AG04450 (cell line): ENCODE measurements at regions of chr17 and their contacts with region 1.

Region 1: GRCh38 chr17:77542551-77543490 is 402.1 kb downstream of the SEC14L1 start:
- DNase-seq: peak; percentile 66
- H3K4me3 ChIP-seq: no peak overlapping the region
- H3K27ac ChIP-seq: no peak overlapping the region
- H3K27me3 ChIP-seq: peaks cover 15% of the 10 kb centered on the region
- CTCF ChIP-seq: peak; percentile 98

Region 2: DNA sequence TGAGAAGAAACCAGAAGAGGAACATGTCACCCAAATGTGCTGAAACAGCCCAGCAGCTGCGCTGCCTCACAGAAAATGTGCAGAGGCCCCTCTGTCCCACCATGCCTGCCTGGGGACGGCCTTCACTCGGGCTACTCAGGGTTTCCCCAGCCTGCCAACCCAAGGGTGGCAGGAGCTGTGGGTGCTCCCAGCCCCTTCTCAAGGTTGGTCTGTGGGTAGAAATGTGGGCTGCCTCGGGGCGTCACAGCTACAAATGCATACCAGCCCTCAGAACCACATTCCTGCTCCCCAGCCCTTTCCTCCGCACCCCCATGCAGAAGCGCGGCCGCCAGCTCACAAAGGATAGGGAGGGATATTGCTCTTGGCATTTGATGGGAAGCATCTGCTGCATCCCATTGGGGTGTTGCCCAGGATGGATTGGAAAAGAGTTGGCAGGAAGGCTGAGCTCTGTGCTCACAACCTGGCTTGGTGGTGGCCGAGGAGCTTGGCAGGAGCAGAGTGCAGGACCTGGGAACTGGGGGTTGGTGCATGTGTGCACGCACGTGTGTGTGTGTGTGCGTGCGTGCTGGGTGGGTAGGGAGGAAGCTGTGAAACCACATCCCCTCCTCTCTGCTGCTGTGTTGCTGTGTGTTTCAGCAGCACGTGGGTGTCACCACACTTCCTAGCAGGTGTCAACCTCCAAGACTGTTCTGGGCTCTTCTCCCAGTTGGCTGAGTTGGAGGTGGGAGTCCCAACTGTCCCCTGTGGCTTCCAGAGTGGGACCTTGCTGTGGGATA is 97.6 kb before region 1 on chr17:
- CTCF ChIA-PET with region 1: no interaction called
- POLR2A ChIA-PET with region 1: no interaction called
- DNase-seq: no peak
- H3K4me3 ChIP-seq: no peak overlapping the region
- H3K27ac ChIP-seq: peak overlapping the region; percentile 92
- H3K27me3 ChIP-seq: no peaks in the 10 kb centered on the region
- CTCF ChIP-seq: no peak

Region 3: GRCh38 chr17:77476931-77477877 is 65.6 kb before region 1 on chr17:
- CTCF ChIA-PET with region 1: no interaction called
- POLR2A ChIA-PET with region 1: no interaction called
- DNase-seq: peak; percentile 91
- H3K4me3 ChIP-seq: peak overlapping the region; percentile 0; the same call in 1 of the 2 replicates
- H3K27ac ChIP-seq: peak overlapping the region; percentile 83
- H3K27me3 ChIP-seq: no peaks in the 10 kb centered on the region
- CTCF ChIP-seq: no peak; the same call in 1 of the 2 replicates

Region 4: GRCh38 chr17:77553459-77554066 is 10.7 kb after region 1 on chr17:
- CTCF ChIA-PET with region 1: interaction called, 11 read pairs
- POLR2A ChIA-PET with region 1: no interaction called
- DNase-seq: no peak
- H3K4me3 ChIP-seq: no peak overlapping the region
- H3K27ac ChIP-seq: no peak overlapping the region
- H3K27me3 ChIP-seq: peaks cover 39% of the 10 kb centered on the region
- CTCF ChIP-seq: no peak